Breast epithelium (tissue), 4 donors: ENCODE measurements at regions of chr13 and their contacts with region 1.

Region 1: GRCh38 chr13:52879950-52880741 is 31.7 kb upstream of the PCDH8 start:
- DNase-seq: no peak
- H3K4me3 ChIP-seq: no peak overlapping the region
- H3K27ac ChIP-seq: no peak overlapping the region
- H3K4me1 ChIP-seq: no peaks in the 10 kb centered on the region
- H3K27me3 ChIP-seq: no peaks in the 10 kb centered on the region
- CTCF ChIP-seq: no peak
- POLR2A ChIP-seq: no peak

Region 2: GRCh38 chr13:52851137-52851962 is 28.8 kb before region 1 on chr13:
- intact Hi-C with region 1: loop called (anchors 1 kb)
- DNase-seq: no peak
- H3K4me3 ChIP-seq: peak overlapping the region; percentile 59 to 74 (median 61)
- H3K27ac ChIP-seq: peak overlapping the region; percentile 33 to 53
- H3K4me1 ChIP-seq: no peaks in the 10 kb centered on the region
- H3K27me3 ChIP-seq: peaks cover 16 to 52% of the 10 kb centered on the region in 2 donors
- CTCF ChIP-seq: no peak
- POLR2A ChIP-seq: no peak